GM10248 (cell line): ENCODE measurements at regions of chr5 and their contacts with region 1.

Region 1: DNA sequence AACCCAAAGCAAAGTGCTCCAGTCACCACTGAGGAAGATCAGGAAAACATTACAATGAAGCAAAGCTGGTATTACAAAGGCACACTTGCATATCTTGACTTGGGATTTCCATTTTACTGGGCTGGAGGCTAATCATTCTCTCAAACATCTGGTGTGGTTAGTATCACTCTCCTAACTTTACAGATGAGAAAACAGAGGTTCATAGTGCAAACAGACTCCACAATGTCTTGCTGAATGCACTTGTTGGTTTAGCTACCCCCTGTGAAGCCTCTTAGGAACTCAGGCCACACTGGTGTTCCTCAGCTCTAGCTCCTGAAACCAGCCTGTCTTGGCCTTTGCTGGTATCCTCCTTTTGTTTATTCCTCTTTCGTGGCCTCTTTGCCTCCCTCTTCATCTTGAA is 29.5 kb upstream of the SMAD5 start:
- DNase-seq: no peak
- CTCF ChIP-seq: no peak

Region 2: DNA sequence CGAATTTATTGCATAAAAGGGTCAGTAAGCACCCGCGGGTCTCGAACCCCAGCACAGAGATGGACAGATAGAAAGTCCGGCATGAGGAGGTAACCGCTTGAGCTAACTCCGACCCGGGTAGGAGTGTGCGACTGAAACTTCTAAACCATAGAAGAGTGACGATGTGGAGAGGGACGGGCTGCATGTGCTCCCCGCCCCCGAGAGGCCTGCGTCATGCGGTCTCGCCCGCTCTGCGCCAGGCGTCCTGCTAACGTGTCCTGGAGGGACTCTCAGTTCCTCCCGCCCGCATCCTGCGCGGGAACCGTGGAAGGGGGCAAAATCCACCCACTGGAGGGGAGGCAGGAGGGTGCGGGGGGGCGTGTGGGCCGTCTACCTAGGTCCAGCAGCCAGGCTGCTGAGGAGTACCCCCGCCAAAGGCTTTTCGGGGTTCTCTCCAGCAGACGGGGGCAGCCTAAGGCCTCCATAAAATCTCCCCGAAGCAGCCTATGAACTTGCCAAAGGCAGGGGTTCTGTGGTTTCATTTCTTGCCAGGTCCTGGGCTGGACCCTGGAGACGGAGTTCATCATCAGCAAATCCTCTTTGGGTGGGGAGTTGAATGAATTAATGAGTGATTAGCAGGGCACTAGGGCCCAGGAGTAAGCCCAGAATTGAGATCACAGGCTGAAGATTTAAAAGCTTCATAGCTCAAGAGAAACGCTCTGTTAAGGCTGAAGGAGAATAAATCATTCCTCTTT is 22.5 kb before region 1 on chr5:
- CTCF ChIA-PET with region 1: interaction called, 13 read pairs
- POLR2A ChIA-PET with region 1: no interaction called
- DNase-seq: peak; percentile 82
- CTCF ChIP-seq: no peak

Region 3: GRCh38 chr5:136115183-136115865 is 12.2 kb after region 1 on chr5:
- CTCF ChIA-PET with region 1: interaction called, 10 read pairs
- POLR2A ChIA-PET with region 1: no interaction called
- DNase-seq: no peak
- CTCF ChIP-seq: no peak

Region 4: GRCh38 chr5:136374003-136374402 is 270.9 kb after region 1 on chr5:
- CTCF ChIA-PET with region 1: no interaction called
- POLR2A ChIA-PET with region 1: no interaction called
- DNase-seq: no peak
- CTCF ChIP-seq: peak; percentile 20